Testis (tissue), 5 donors: ENCODE measurements at regions of chr14 and their contacts with region 1.

Region 1: GRCh38 chr14:73759714-73760597 is 45.8 kb upstream of the PNMA1 start:
- DNase-seq: peak; percentile 97
- H3K4me3 ChIP-seq: peak overlapping the region; percentile 70 to 81
- H3K27ac ChIP-seq: peak overlapping the region; percentile 84 to 94
- H3K4me1 ChIP-seq: peaks cover 75% of the 10 kb centered on the region
- H3K27me3 ChIP-seq: no peaks in the 10 kb centered on the region
- CTCF ChIP-seq: no peak
- POLR2A ChIP-seq: no peak

Region 2: DNA sequence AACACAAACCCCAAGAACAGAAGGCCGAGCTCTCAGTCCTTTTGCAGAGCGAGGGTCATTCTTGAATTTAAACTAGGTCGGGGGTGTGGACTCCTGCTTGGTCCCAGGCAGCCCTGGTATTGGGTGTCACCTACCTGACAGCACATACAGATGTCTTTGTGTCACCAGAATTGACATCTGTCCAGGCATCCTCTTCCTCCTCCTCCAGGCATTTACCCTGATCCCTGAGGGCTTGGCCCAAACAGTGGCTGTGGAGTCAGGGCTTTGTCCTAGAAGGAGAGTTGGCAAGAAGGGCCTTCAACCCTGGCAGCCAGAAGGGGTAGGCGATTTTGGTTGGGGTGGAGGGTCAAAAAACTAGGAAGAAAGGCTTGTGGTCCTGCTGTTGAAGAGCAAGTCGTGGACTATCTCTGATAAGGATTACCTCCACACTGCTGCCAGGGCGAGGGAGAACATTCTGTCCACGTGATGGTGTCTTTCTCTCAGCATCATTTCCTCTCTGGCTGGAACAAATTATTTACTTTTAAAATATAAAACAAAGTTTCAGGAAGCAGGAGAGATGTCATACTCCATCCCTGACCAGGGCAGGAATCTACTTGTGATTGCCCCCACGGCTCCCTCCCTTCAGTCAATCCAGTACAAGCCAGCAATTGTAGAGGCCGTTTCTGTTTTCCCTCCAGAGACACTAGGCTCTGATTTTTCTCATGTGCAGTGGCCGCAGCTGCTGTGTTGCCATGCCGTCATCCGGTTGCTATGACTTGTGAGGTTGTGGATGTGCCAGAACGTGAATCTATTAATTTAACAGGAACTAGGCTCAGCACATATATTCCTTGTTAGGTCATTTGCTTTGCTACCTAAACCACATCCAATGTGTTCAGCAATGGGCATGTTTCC is 30.0 kb after region 1 on chr14:
- intact Hi-C with region 1: loop called (anchors 5 kb)
- DNase-seq: peak; percentile 51
- H3K4me3 ChIP-seq: no peak overlapping the region
- H3K27ac ChIP-seq: peak overlapping the region; percentile 80
- H3K4me1 ChIP-seq: peaks cover 53% of the 10 kb centered on the region
- H3K27me3 ChIP-seq: no peaks in the 10 kb centered on the region
- CTCF ChIP-seq: no peak
- POLR2A ChIP-seq: no peak

Region 3: DNA sequence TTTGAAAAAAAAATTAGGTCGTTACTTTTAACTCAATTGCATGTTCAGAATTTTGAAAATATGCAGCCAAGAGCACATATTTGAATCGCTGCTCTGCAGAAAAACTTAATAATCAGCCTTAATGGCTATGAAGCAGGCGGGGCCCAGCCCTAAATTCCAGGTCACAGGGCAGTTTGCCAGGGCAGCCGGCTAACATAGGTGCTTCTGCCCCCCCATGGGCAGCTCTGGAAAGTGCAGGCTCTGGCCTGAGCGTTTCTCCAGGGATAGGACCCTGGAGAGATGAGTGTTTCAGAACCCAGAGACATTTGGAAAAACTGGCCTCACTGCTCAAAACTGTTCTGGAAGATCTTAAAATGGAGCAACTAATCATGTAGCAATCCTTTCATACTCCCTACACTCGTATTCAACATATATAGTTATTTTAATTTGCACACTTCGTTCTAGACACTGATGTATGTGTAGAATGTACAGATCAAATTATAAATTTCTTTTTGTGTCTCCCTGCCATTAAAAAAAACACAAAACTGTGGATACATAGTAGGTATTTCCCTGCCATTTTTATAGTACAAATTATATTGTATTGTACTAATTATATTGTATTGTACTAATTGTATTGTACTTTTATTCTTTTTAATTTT is 65.7 kb after region 1 on chr14:
- intact Hi-C with region 1: no loop called
- DNase-seq: peak; percentile 96
- H3K4me3 ChIP-seq: no peak overlapping the region
- H3K27ac ChIP-seq: peak overlapping the region in 1 of 2 donors; percentile 64
- H3K4me1 ChIP-seq: no peaks in the 10 kb centered on the region
- H3K27me3 ChIP-seq: no peaks in the 10 kb centered on the region
- CTCF ChIP-seq: peak; percentile 81 to 88 (median 81)
- POLR2A ChIP-seq: no peak